Ascending aorta (tissue), 2 donors: ENCODE measurements at regions of chr9 and their contacts with region 1.

Region 1: GRCh38 chr9:136482793-136483588 is at the start of gene SEC16A:
- DNase-seq: peak; percentile 93 to 99
- H3K4me3 ChIP-seq: peak within 1 kb of the TSS; percentile 71 to 82
- H3K27ac ChIP-seq: peak within 1 kb of the TSS; percentile 98 to 100
- H3K4me1 ChIP-seq: peaks cover 15 to 16% of the 10 kb centered on the region in 2 donors
- H3K27me3 ChIP-seq: no peaks in the 10 kb centered on the region
- CTCF ChIP-seq: no peak
- total RNA-seq, gene SEC16A: 66.1 TPM

Region 2: GRCh38 chr9:136410500-136411287 is 72.3 kb before region 1 on chr9 and contains the starts of genes ENTR1 and PMPCA:
- intact Hi-C with region 1: loop called (anchors 5 kb)
- DNase-seq: peak; percentile 67 to 96
- H3K4me3 ChIP-seq: peak within 1 kb of the TSS; percentile 72 to 92
- H3K27ac ChIP-seq: peak within 1 kb of the TSS; percentile 77 to 80
- H3K4me1 ChIP-seq: peaks cover 9 to 19% of the 10 kb centered on the region in 2 donors
- H3K27me3 ChIP-seq: no peaks in the 10 kb centered on the region
- CTCF ChIP-seq: no peak
- total RNA-seq, gene ENTR1: 27.7 TPM
- total RNA-seq, gene PMPCA: 69.1 TPM

Region 3: GRCh38 chr9:136545966-136546698 is 63.1 kb after region 1 on chr9 and contains the start of gene NOTCH1:
- intact Hi-C with region 1: loop called (anchors 2 kb)
- DNase-seq: peak; percentile 70 to 96
- H3K4me3 ChIP-seq: peak within 1 kb of the TSS; percentile 68 to 96
- H3K27ac ChIP-seq: peak within 1 kb of the TSS; percentile 95 to 98
- H3K4me1 ChIP-seq: peaks cover 24 to 57% of the 10 kb centered on the region in 2 donors
- H3K27me3 ChIP-seq: no peaks in the 10 kb centered on the region
- CTCF ChIP-seq: peak in 1 of 3 experiments; percentile 18
- total RNA-seq, gene NOTCH1: 120 TPM

Region 4: DNA sequence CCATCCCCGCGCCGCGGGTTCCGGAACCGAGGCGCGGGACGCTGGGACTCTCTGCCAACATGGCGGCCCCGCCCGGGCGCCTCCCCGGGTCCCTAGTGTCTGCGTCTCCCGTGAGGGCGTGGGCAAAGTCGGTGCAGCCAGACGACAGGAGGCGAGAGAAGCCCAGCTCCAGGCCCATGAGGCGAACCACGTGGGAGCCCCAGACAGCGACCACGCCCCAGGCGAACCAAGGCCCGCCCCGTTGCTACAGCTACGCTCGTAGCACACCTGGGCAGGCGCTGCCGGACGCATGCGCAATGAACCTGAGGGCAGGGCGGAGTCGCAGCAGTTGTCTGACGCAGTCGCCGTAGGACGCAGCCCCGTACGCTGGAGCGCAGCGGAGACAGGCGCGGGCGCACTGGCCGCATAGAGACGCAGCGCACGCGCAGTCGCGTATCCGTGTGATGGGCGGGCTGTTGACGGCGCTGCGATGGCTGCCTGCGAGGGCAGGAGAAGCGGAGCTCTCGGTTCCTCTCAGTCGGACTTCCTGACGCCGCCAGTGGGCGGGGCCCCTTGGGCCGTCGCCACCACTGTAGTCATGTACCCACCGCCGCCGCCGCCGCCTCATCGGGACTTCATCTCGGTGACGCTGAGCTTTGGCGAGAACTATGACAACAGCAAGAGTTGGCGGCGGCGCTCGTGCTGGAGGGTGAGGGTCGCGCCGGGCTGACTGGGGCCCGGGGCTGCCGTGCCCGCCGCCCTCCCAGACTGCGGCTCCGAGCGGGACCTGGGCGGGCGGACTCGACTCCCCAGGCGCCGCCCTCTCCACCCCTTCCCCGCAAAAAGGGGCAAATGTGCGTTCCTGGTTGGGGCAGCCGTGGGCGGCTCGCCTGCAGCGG is 603.8 kb after region 1 on chr9 and contains the start of gene MAN1B1:
- intact Hi-C with region 1: loop called (anchors 1 kb)
- DNase-seq: peak; percentile 94 to 98
- H3K4me3 ChIP-seq: peak within 1 kb of the TSS; percentile 74 to 99
- H3K27ac ChIP-seq: peak within 1 kb of the TSS; percentile 91 to 96
- H3K4me1 ChIP-seq: peaks cover 12 to 17% of the 10 kb centered on the region in 2 donors
- H3K27me3 ChIP-seq: no peaks in the 10 kb centered on the region
- CTCF ChIP-seq: no peak
- total RNA-seq, gene MAN1B1: 85.3 TPM

Region 5: DNA sequence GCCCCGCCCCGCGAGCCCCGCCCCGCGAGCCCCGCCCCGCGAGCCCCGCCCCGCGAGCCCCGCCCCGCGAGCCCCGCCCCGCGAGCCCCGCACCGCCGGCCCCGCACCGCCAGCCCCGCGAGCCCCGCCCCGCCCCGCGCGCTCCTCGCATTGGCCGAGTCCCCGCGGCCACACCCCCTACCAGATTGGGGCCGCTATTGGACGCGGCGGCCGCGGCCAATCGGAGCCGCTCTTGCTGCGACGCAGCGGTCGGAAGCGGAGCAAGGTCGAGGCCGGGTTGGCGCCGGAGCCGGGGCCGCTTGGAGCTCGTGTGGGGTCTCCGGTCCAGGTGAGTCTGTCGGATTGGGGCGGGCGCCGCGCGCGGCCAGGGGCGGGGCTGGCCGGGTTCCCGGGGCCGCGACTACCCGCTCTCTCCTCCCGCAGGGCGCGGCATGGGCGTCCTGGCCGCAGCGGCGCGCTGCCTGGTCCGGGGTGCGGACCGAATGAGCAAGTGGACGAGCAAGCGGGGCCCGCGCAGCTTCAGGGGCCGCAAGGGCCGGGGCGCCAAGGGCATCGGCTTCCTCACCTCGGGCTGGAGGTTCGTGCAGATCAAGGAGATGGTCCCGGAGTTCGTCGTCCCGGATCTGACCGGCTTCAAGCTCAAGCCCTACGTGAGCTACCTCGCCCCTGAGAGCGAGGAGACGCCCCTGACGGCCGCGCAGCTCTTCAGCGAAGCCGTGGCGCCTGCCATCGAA is 1068.8 kb after region 1 on chr9 and contains the start of gene MRPL41:
- intact Hi-C with region 1: loop called (anchors 2 kb)
- DNase-seq: peak; percentile 56 to 94
- H3K4me3 ChIP-seq: peak within 1 kb of the TSS; percentile 79 to 91
- H3K27ac ChIP-seq: peak within 1 kb of the TSS; percentile 88 to 96
- H3K4me1 ChIP-seq: peaks cover 3 to 18% of the 10 kb centered on the region in 2 donors
- H3K27me3 ChIP-seq: no peaks in the 10 kb centered on the region
- CTCF ChIP-seq: no peak
- total RNA-seq, gene MRPL41: 121 TPM